ENCODE measurements at regions of chr3 and their contacts with region 1.

Region 1: GRCh38 chr3:116135457-116136085 is 309.7 kb downstream of the LSAMP start:
- DNase-seq: peak; percentile 53
- ATAC-seq: peak; percentile 94

Region 2: GRCh38 chr3:115912372-115912771 is 223.2 kb before region 1 on chr3:
- intact Hi-C with region 1: no loop called
- DNase-seq: peak; percentile 56
- ATAC-seq: peak; percentile 75

Region 3: DNA sequence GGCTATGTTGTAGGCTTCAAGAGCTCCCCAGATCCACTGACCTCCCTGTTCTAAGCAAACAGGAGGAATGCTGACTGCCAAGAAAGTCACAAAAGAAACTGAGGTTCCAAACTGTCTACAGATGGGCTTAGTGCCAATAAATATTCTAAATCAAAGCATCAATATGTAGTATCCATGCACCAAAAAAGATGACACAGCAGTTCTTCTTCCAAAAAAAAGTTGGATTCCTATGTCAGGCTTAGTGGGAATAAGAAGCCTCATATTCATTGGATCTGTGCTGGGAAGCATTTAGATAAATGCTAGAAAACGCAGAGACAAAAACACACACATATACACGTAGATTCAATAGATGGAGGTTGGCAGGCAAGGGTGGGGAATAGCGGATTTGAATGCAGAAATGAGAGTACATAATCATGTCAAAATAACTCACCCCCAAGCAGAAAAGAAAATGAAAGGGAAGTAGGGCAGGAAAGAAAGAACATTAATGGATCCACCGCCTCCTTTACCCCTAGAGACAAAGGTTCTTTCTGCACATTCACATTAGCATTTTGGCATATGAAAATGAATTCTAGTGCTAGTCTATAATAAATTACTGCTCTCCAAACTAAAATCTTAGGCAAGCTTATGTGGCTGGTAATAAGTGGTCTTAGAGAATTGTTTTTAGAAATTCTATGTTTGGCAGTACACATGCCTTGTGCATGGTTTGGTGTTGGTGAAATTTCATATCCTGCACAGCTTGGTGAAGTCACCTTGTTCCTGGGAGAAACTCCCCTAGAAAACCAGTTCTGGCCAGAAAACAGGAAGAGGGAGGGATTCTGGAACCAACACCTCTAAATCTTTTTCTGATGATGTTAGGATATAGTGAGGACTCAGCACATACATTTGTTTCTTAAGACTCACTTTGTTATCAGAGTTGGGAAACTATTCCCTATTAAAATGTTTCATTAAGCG is 26.3 kb after region 1 on chr3:
- intact Hi-C with region 1: no loop called
- DNase-seq: no peak
- ATAC-seq: no peak

Region 4: GRCh38 chr3:116757315-116757714 is 621.7 kb after region 1 on chr3:
- intact Hi-C with region 1: loop called (anchors 10 kb)
- DNase-seq: no peak
- ATAC-seq: no peak

Measured in Right ventricle myocardium superior (tissue), 1 donor.